ENCODE measurements at regions of chr7 and their contacts with region 1.

Region 1: GRCh38 chr7:142811154-142811737 is 40.5 kb downstream of the PRSS2 start:
- DNase-seq: peak; percentile 86
- H3K4me3 Mint-ChIP-seq: peak overlapping the region; percentile 73
- H3K27ac Mint-ChIP-seq: peak overlapping the region; percentile 99
- H3K4me1 Mint-ChIP-seq: peaks cover 75% of the 10 kb centered on the region
- H3K27me3 Mint-ChIP-seq: peaks cover 2% of the 10 kb centered on the region

Region 2: DNA sequence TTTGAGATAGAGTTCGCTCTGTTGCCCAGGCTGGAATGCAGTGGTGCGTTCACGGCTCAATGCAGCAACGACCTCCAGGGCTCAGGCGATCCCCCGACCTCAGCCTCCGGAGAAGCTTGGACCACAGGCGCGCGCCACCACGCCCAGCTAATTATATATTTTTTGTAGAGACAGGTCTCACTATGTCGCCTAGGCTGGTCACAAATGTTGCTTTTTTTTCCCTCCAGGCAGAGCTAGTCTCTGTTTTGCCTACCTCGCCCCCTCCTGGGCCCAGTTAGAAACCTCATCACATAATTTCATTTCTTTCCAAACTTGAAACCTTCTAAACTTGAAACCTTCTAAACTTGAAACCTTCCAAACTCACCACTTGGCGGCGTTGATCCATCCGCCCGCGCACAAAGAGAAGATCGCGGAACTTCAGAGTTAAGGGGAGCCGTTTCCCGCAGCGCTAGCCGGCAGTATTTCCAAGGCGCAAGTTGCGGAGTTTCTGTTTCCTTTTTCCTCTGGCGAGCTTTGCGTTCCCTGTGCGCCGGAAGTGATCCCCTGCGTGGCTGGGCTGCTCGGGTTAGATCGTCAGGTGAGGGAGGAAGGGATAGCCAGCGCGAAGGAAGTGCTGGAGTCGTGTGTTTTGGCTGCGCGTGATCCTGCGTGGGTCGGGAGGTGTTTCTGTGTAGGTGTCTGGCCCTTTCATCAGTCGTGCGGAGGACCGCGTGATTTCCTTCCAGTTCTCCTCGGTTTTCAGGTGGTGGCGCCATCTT is 1073.2 kb before region 1 on chr7 and contains the start of gene SSBP1:
- intact Hi-C with region 1: loop called (anchors 5 kb)
- DNase-seq: peak; percentile 98
- H3K4me3 Mint-ChIP-seq: peak within 1 kb of the TSS; percentile 99
- H3K27ac Mint-ChIP-seq: peak within 1 kb of the TSS; percentile 99
- H3K4me1 Mint-ChIP-seq: peaks cover 29% of the 10 kb centered on the region
- H3K27me3 Mint-ChIP-seq: peaks cover 5% of the 10 kb centered on the region
- total RNA-seq, gene SSBP1: 264 and 266 TPM in 2 replicates

Region 3: DNA sequence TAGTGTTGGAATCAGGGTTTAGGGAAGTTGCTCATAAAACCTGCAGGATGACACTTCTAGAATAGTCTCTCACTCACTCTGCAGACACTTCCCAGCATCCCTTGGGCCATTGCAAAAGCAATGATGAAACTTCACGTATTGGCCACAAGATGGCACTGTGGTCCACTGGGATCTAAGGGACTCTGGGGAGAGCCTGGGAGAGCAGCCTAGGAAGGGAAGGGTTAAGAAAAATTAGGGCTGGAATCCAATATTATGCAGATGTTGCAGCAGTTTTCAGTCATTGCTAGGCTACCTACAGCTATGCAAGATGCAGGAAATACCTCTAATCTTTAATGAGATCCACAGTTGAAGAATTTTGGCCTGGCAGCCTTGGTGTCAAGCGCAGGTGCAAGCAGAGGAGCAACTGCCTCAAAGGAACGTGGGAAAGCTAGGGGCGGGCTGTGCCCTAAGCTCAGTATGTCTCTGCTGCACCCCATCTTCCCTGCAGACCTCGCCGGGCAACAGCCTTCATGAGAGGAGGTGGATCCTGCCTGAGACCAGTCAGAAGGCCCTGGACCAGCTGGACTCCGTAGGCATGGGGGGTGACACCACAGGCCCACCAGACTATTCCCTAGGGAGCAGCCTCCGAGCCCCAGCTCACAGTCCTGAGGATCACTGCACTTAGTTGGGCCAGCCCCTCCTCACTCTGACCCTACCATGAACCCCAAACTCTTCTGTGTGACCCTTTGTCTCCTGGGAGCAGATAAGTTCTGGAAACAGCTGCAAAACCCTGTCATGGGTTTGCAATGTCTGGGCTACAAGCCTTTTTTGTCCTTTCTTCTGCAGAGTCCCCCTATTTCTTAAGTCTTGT is 425.5 kb before region 1 on chr7:
- intact Hi-C with region 1: loop called (anchors 2 kb)
- DNase-seq: peak; percentile 82
- H3K4me3 Mint-ChIP-seq: peak overlapping the region; percentile 71
- H3K27ac Mint-ChIP-seq: peak overlapping the region; percentile 76
- H3K4me1 Mint-ChIP-seq: peaks cover 23% of the 10 kb centered on the region
- H3K27me3 Mint-ChIP-seq: peaks cover 3% of the 10 kb centered on the region

Region 4: DNA sequence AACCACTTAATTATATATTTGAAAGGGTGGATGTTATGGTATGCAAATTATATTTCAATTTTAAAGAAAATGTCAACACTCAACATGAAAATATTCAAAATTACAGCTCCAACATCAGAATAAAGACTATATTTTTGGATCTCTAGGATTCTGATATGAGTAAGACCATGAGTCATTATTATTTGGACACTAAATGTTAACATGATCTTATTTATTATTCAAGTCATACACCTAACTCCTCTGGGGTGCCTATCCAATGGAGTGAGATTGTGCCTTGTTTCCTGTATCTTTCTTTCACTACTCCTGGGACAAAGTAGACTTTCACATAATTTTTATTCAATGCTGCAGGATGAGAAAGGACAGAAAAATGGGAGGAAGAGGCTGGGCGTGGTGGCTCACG is 197.1 kb before region 1 on chr7:
- intact Hi-C with region 1: loop called (anchors 2 kb)
- DNase-seq: no peak
- H3K4me3 Mint-ChIP-seq: no peak overlapping the region
- H3K27ac Mint-ChIP-seq: no peak overlapping the region
- H3K4me1 Mint-ChIP-seq: peaks cover 7% of the 10 kb centered on the region
- H3K27me3 Mint-ChIP-seq: peaks cover 24% of the 10 kb centered on the region

Region 5: DNA sequence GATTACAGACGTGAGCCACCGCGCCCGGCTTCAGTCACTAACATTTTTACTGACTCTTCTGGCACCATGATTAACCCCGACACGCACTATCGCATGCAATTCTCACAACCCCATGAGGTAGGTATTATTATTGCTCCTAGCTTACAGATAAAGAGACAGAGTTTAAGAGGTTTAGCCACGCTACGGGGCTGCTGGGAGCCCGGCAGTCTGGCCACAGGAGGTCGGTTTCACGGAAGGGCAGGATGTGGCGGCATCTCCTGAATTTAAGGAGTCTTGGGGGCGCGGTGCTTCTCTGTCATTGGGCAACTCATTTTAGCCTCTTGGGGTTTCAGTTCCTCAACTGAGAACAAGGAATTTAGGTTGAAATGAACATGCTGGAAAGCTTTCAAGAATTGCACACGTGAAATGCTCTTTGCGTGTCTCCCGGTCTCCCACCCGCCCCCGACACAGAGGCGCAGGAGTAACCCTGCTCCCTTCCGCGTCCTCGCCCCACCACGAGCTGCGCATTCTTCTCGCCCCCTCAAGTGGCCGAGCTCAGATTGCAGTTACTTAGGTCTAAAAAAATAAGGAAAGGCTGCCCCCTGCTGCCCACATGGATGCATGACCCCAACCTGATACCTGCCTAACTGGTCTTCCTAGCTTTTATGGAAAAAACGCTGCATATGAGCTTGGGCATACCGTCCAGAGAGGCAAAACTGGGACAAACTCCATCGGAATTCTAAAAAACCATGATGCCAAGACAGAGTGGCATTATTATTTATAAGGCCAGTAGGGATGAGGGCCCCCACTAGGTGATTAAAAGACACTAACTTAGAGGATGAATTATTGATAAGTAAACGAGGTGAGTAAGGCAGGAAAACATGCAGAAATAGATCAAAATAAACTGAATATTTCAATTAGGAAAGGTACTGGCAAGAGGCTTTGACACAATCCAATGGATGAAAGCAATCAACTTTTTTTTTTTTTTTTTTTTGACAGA is 28.0 kb before region 1 on chr7:
- intact Hi-C with region 1: loop called (anchors 1 kb)
- DNase-seq: peak; percentile 91
- H3K4me3 Mint-ChIP-seq: peak overlapping the region; percentile 79
- H3K27ac Mint-ChIP-seq: peak overlapping the region; percentile 83
- H3K4me1 Mint-ChIP-seq: peaks cover 8% of the 10 kb centered on the region
- H3K27me3 Mint-ChIP-seq: no peaks in the 10 kb centered on the region

Region 6: DNA sequence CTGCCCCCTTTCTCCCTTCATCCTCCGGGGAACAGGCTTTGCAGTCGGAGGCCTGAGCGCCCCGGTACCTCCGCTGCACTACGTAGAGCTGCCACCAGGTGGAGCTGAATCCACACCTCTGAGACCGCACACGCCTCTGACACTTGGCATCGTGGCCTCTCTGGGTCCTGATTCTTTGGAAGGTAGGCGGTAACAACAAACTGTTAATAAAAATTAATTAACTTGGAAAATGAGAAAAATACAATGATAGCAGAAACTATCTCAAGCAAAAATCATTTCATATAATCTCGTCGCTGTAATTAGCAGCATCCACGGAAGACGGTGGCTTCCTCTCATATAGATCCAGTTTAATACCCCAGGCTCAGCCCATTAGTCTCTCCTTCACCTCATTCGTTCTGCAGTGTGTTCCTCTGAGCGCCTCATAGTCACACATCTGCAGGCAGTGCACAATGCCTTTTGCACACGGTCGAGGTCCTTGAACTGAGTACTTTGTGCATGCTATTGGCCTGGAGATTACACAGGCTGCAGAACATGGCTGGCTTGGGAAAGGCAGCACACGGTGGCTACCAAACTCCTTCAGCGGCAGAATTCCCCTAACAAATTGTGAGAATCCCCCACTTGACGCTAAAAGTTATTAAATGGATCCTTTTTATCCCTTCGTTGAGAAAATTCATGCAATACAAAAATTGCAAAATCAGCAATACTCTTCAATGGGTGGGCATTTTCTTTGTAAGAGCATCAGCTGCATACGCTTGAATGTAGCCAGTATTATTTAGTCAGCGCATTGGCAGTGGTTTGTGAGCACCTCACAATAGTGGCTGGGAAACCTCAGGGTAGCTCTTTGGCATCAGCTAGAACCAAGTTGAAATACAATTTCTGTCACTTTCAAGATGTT is 197.0 kb after region 1 on chr7:
- intact Hi-C with region 1: loop called (anchors 2 kb)
- DNase-seq: peak; percentile 94
- H3K4me3 Mint-ChIP-seq: no peak overlapping the region
- H3K27ac Mint-ChIP-seq: no peak overlapping the region
- H3K4me1 Mint-ChIP-seq: peaks cover 5% of the 10 kb centered on the region
- H3K27me3 Mint-ChIP-seq: peaks cover 17% of the 10 kb centered on the region

Region 7: GRCh38 chr7:143901668-143902331 is 1090.6 kb after region 1 on chr7 and contains the start of gene TCAF1:
- intact Hi-C with region 1: loop called (anchors 5 kb)
- DNase-seq: peak; percentile 95
- H3K4me3 Mint-ChIP-seq: peak within 1 kb of the TSS; percentile 91
- H3K27ac Mint-ChIP-seq: peak within 1 kb of the TSS; percentile 89
- H3K4me1 Mint-ChIP-seq: peaks cover 23% of the 10 kb centered on the region
- H3K27me3 Mint-ChIP-seq: no peaks in the 10 kb centered on the region
- total RNA-seq, gene TCAF1: 12.6 and 13.5 TPM in 2 replicates